CD8-positive, alpha-beta T cell (primary cell): ENCODE measurements at regions of chr11 and their contacts with region 1.

Region 1: DNA sequence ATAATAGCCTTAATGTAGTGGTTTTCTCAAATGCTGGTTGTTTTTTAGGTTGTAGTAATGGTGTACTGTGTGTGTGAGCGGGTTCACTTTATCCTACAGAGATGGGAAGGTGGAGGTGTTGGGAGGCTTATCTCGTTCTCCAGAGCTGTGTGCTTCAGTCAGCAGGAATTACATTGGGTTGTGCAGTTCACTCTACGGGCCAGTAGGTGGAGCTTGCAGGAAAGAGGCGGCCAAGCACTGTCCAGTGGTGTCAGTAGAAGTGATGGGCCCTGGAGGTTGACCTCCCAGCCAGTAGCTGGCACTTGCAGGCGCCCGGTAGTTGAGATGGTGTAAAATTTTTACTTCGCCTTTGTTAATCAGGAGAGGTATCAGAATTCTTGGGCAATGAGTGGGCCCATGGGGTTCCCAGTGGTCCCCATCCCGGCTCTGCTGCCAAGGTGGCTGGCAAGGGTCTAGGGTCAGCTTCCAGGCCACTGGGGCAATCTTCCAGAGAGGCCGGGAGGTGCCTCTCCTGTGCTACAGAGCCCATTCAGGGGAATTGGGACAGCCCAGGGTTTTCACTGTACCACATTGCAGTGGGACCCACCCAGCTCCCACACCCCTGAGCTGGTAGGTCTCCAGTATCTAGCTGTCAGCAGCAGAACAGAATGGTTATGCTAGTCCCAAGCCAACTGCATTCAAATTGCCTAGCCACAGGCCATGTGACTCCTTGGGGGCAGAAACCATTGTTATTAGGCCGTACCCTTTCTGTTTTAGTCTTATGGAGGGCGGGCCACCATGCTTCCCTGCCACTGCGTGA is 43.9 kb downstream of the BIRC2 start:
- DNase-seq: peak in 8 of 9 experiments; percentile 24 to 77 (median 55)
- ATAC-seq: peak; percentile 71
- H3K4me3 ChIP-seq: no peak overlapping the region
- H3K4me3 Mint-ChIP-seq: no peak overlapping the region
- H3K27ac ChIP-seq: peak overlapping the region in 1 of 2 experiments; percentile 8
- H3K27ac Mint-ChIP-seq: peak overlapping the region; percentile 53
- H3K4me1 ChIP-seq: peaks cover 17% of the 10 kb centered on the region
- H3K4me1 Mint-ChIP-seq: peaks cover 44% of the 10 kb centered on the region
- H3K27me3 ChIP-seq: no peaks in the 10 kb centered on the region
- H3K27me3 Mint-ChIP-seq: no peaks in the 10 kb centered on the region
- CTCF ChIP-seq: peak; percentile 82

Region 2: DNA sequence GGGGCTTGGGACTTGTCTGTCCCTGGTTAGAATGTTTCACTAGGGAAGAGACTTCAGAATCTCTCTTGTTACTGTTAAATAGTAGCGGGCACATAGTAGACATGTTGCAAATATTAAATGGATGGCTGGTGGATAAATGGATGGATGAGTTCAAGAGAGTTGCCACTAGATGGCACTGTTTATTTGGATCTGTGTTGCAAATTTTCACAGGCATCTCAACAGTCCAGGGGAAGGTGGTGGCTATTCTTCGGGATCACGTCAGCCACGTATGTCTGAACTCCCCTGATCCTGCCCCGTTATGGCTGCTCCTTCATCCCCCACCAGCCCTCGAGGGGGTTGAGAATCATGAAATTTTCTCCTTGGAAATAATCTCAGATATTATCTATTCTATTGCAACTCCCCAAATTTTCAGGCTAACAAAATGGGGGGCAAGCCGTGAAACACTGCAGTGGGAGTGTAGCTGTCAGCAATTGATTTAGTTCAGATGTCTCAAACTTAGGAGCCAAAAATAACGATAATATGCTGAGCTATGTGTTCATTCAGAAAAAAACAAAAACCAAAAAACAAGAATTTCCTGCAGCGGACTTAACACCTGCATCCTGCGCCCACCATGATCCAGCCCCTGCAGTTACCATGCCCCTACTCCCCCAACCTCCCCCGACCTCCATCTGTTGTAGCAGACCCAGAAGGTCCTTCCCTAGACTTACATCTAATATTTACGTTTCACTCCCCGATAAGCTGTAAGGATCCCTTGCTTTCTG is 102.7 kb before region 1 on chr11:
- CTCF ChIA-PET with region 1: interaction called, 23 read pairs
- POLR2A ChIA-PET with region 1: no interaction called
- intact Hi-C with region 1: loop called in 1 of 2 experiments (anchors 5 kb)
- DNase-seq: peak in 3 of 9 experiments; percentile 34 to 85 (median 76)
- ATAC-seq: peak; percentile 89
- H3K4me3 ChIP-seq: no peak overlapping the region
- H3K4me3 Mint-ChIP-seq: peak overlapping the region; percentile 35
- H3K27ac ChIP-seq: no peak overlapping the region
- H3K27ac Mint-ChIP-seq: no peak overlapping the region
- H3K4me1 ChIP-seq: no peaks in the 10 kb centered on the region
- H3K4me1 Mint-ChIP-seq: peaks cover 12% of the 10 kb centered on the region
- H3K27me3 ChIP-seq: no peaks in the 10 kb centered on the region
- H3K27me3 Mint-ChIP-seq: no peaks in the 10 kb centered on the region
- CTCF ChIP-seq: peak; percentile 80

Region 3: DNA sequence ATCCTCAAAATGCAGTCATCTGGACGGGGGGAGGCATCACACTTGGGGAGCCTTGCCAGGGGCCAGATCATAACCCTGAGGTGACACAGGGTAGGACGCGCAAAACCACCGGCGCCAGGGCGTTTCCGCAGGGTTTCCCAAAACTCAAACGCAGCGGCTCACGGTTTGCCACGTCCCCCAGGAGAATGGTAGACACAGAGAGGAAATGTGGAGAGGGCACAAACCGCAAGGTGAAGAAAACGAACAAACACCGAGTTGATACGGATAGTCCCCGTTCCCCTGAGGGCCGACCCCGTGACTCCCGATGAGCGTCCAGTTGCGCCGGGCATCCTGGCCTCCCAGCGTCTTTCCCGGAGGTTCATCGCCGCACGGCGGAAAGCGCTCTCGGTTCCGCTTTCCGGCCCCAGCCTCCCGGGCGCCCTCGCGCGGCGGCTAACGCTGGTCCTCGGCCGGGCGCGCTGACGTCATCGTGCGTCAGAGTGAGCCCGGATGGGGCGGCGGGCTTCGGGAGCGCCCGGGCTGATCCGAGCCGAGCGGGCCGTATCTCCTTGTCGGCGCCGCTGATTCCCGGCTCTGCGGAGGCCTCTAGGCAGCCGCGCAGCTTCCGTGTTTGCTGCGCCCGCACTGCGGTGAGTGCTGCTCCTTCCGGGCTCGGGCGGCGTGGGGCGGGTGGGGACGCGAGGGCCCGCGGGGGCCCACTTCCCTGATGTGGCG is 44.0 kb before region 1 on chr11 and contains the start of gene BIRC2:
- CTCF ChIA-PET with region 1: interaction called, 32 read pairs
- POLR2A ChIA-PET with region 1: no interaction called
- intact Hi-C with region 1: no loop called
- DNase-seq: peak; percentile 92 to 97 (median 95)
- ATAC-seq: peak; percentile 78
- H3K4me3 ChIP-seq: peak within 1 kb of the TSS; percentile 60 to 72
- H3K4me3 Mint-ChIP-seq: peak within 1 kb of the TSS; percentile 98
- H3K27ac ChIP-seq: peak within 1 kb of the TSS; percentile 94
- H3K27ac Mint-ChIP-seq: peak within 1 kb of the TSS; percentile 99
- H3K4me1 ChIP-seq: peaks cover 29% of the 10 kb centered on the region
- H3K4me1 Mint-ChIP-seq: peaks cover 46% of the 10 kb centered on the region
- H3K27me3 ChIP-seq: no peaks in the 10 kb centered on the region
- H3K27me3 Mint-ChIP-seq: no peaks in the 10 kb centered on the region
- CTCF ChIP-seq: peak; percentile 54
- total RNA-seq, gene BIRC2: 161 to 178 TPM

Region 4: GRCh38 chr11:102375720-102376399 is 15.0 kb before region 1 on chr11:
- CTCF ChIA-PET with region 1: interaction called, 19 read pairs
- POLR2A ChIA-PET with region 1: interaction called, 4 read pairs
- intact Hi-C with region 1: no loop called
- DNase-seq: no peak
- ATAC-seq: no peak
- H3K4me3 ChIP-seq: no peak overlapping the region
- H3K4me3 Mint-ChIP-seq: no peak overlapping the region
- H3K27ac ChIP-seq: no peak overlapping the region
- H3K27ac Mint-ChIP-seq: peak overlapping the region; percentile 28
- H3K4me1 ChIP-seq: peaks cover 8% of the 10 kb centered on the region
- H3K4me1 Mint-ChIP-seq: peaks cover 33% of the 10 kb centered on the region
- H3K27me3 ChIP-seq: no peaks in the 10 kb centered on the region
- H3K27me3 Mint-ChIP-seq: no peaks in the 10 kb centered on the region
- CTCF ChIP-seq: no peak

Region 5: DNA sequence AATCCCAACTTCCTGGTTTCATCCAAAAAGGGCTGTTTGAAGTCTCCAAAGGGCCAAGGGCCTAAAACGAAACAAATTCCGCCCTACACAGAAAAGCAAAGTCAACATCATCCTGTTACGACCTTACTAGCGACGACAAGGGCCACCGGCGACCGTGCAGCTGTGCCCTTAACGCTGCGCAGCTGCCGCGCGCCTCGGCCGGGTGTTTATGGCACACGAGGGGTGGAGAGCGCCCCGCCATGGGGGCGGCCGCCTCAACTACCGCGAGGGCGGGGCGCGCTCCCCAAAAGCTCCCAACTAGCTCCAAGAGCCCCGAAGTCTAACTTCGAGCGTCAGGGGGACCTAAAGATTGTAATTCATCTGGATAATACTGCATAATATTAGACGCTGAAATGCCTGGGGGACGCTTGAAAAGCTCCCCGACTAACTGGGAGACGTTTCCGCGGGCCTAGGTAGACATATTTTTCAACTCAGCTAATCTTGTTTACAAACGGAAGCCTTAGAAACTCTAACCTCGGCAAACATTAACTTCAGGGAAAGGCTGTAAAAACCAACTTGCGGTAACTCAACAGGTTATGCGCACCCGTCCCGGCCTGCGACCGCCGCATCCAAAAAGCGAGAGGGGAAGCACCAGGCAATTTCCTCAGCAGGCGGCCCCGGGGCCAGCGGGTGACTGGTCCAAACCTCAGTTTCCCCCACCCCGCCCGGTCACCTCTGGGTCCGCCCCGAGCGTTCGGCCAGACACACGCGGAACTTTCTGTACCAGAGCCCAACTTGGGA is 61.0 kb after region 1 on chr11:
- CTCF ChIA-PET with region 1: interaction called, 22 read pairs
- POLR2A ChIA-PET with region 1: interaction called, 21 read pairs
- intact Hi-C with region 1: loop called in 1 of 2 experiments (anchors 1 kb)
- DNase-seq: peak; percentile 57 to 89 (median 78)
- ATAC-seq: peak; percentile 54
- H3K4me3 ChIP-seq: peak overlapping the region; percentile 88 to 90
- H3K4me3 Mint-ChIP-seq: peak overlapping the region; percentile 97
- H3K27ac ChIP-seq: peak overlapping the region; percentile 71 to 85
- H3K27ac Mint-ChIP-seq: peak overlapping the region; percentile 96
- H3K4me1 ChIP-seq: peaks cover 59% of the 10 kb centered on the region
- H3K4me1 Mint-ChIP-seq: peaks cover 72% of the 10 kb centered on the region
- H3K27me3 ChIP-seq: no peaks in the 10 kb centered on the region
- H3K27me3 Mint-ChIP-seq: no peaks in the 10 kb centered on the region
- CTCF ChIP-seq: peak; percentile 12

Region 6: GRCh38 chr11:102476812-102477211 is 85.9 kb after region 1 on chr11:
- CTCF ChIA-PET with region 1: interaction called, 13 read pairs
- POLR2A ChIA-PET with region 1: interaction called, 3 read pairs
- intact Hi-C with region 1: no loop called
- DNase-seq: peak in 5 of 9 experiments; percentile 21 to 60 (median 36)
- ATAC-seq: peak; percentile 92
- H3K4me3 ChIP-seq: no peak overlapping the region
- H3K4me3 Mint-ChIP-seq: peak overlapping the region; percentile 10
- H3K27ac ChIP-seq: peak overlapping the region in 1 of 2 experiments; percentile 3
- H3K27ac Mint-ChIP-seq: peak overlapping the region; percentile 92
- H3K4me1 ChIP-seq: peaks cover 34% of the 10 kb centered on the region
- H3K4me1 Mint-ChIP-seq: peaks cover 58% of the 10 kb centered on the region
- H3K27me3 ChIP-seq: no peaks in the 10 kb centered on the region
- H3K27me3 Mint-ChIP-seq: no peaks in the 10 kb centered on the region
- CTCF ChIP-seq: no peak

Region 7: GRCh38 chr11:102495161-102496042 is 104.5 kb after region 1 on chr11:
- CTCF ChIA-PET with region 1: interaction called, 46 read pairs
- POLR2A ChIA-PET with region 1: interaction called, 3 read pairs
- intact Hi-C with region 1: loop called (anchors 1 to 2 kb)
- DNase-seq: peak in 7 of 9 experiments; percentile 24 to 89 (median 39)
- ATAC-seq: peak; percentile 94
- H3K4me3 ChIP-seq: no peak overlapping the region
- H3K4me3 Mint-ChIP-seq: peak overlapping the region; percentile 43
- H3K27ac ChIP-seq: no peak overlapping the region
- H3K27ac Mint-ChIP-seq: peak overlapping the region; percentile 16
- H3K4me1 ChIP-seq: peaks cover 4% of the 10 kb centered on the region
- H3K4me1 Mint-ChIP-seq: peaks cover 14% of the 10 kb centered on the region
- H3K27me3 ChIP-seq: peaks cover 0 to 4% of the 10 kb centered on the region in 2 experiments
- H3K27me3 Mint-ChIP-seq: peaks cover 3% of the 10 kb centered on the region
- CTCF ChIP-seq: peak; percentile 87